ENCODE measurements at regions of chr10 and their contacts with region 1.

Region 1: DNA sequence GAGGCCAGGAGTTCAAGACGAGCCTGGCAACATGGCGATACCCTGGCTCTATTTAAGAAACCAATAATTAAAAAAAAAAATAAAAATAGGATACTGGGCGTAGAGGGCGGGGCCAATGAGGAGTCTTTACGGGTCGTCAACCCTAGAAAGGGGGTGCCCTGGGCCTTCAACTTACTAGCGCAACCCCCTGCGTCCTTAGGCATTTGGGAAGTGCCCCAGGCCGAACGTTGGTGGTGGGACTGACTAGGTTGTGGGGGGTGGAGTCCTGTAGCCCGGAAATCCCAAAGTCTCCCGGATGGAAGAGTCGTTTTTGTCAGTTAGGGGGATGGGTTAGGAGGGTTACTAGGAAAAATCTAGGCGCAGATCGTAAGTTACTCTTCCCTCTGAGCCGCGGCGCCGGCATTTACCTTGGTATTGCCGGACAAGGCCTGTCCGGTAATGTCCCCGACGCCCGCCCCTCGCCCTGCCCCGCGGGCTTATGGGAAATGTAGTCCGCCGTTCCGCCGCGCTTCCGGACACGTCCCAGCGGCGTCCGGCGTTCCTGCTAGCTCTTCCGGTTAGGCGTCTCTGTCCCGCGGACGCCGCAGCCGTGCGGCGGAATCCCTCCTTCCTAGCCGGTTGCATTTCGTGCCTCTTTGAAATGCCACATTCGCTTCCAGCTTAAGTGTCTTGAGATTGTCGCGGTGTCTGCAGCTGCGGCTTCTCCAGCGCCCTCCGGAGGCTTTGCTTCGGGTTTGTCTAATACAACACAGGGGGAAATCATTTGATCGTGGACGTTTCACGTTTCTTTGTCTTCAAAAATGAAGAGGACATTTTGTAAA is 1.3 kb upstream of the ACBD5 start:
- DNase-seq: peak; percentile 93
- H3K4me3 Mint-ChIP-seq: peak overlapping the region; percentile 97
- H3K27ac Mint-ChIP-seq: peak overlapping the region; percentile 100
- H3K4me1 Mint-ChIP-seq: peaks cover 24% of the 10 kb centered on the region
- H3K27me3 Mint-ChIP-seq: no peaks in the 10 kb centered on the region

Region 2: GRCh38 chr10:26697163-26697921 is 544.5 kb before region 1 on chr10 and contains the start of gene PDSS1:
- CTCF ChIA-PET with region 1: no interaction called
- POLR2A ChIA-PET with region 1: no interaction called
- intact Hi-C with region 1: loop called (anchors 5 kb)
- DNase-seq: peak; percentile 75
- H3K4me3 Mint-ChIP-seq: peak within 1 kb of the TSS; percentile 99
- H3K27ac Mint-ChIP-seq: peak within 1 kb of the TSS; percentile 92
- H3K4me1 Mint-ChIP-seq: peaks cover 25% of the 10 kb centered on the region
- H3K27me3 Mint-ChIP-seq: no peaks in the 10 kb centered on the region
- total RNA-seq, gene PDSS1: 12.9 to 15.4 TPM

Region 3: GRCh38 chr10:27099916-27100812 is 141.7 kb before region 1 on chr10 and contains the start of gene ANKRD26:
- CTCF ChIA-PET with region 1: no interaction called
- POLR2A ChIA-PET with region 1: interaction called, 6 read pairs
- intact Hi-C with region 1: loop called (anchors 1 kb)
- DNase-seq: peak; percentile 97
- H3K4me3 Mint-ChIP-seq: peak within 1 kb of the TSS; percentile 85
- H3K27ac Mint-ChIP-seq: peak within 1 kb of the TSS; percentile 95
- H3K4me1 Mint-ChIP-seq: peaks cover 40% of the 10 kb centered on the region
- H3K27me3 Mint-ChIP-seq: peaks cover 2% of the 10 kb centered on the region
- total RNA-seq, gene ANKRD26: 6.7 to 7.1 TPM

Region 4: GRCh38 chr10:27252267-27253000 is 10.6 kb after region 1 on chr10:
- CTCF ChIA-PET with region 1: interaction called, 20 read pairs
- POLR2A ChIA-PET with region 1: interaction called, 15 read pairs
- intact Hi-C with region 1: loop called (anchors 1 kb)
- DNase-seq: peak; percentile 88
- H3K4me3 Mint-ChIP-seq: peak overlapping the region; percentile 79
- H3K27ac Mint-ChIP-seq: peak overlapping the region; percentile 77
- H3K4me1 Mint-ChIP-seq: peaks cover 12% of the 10 kb centered on the region
- H3K27me3 Mint-ChIP-seq: peaks cover 3% of the 10 kb centered on the region

Region 5: GRCh38 chr10:27345455-27345920 is 103.6 kb after region 1 on chr10:
- CTCF ChIA-PET with region 1: no interaction called
- POLR2A ChIA-PET with region 1: interaction called, 5 read pairs
- intact Hi-C with region 1: loop called (anchors 5 kb)
- DNase-seq: no peak
- H3K4me3 Mint-ChIP-seq: no peak overlapping the region
- H3K27ac Mint-ChIP-seq: peak overlapping the region; percentile 65
- H3K4me1 Mint-ChIP-seq: peaks cover 29% of the 10 kb centered on the region
- H3K27me3 Mint-ChIP-seq: peaks cover 11% of the 10 kb centered on the region

Region 6: GRCh38 chr10:28334296-28334695 is 1092.4 kb after region 1 on chr10:
- CTCF ChIA-PET with region 1: no interaction called
- POLR2A ChIA-PET with region 1: interaction called, 3 read pairs
- intact Hi-C with region 1: loop called (anchors 2 kb)
- DNase-seq: peak; percentile 44
- H3K4me3 Mint-ChIP-seq: peak overlapping the region; percentile 78
- H3K27ac Mint-ChIP-seq: peak overlapping the region; percentile 99
- H3K4me1 Mint-ChIP-seq: peaks cover 54% of the 10 kb centered on the region
- H3K27me3 Mint-ChIP-seq: no peaks in the 10 kb centered on the region